Heart right ventricle (tissue), 16 donors: ENCODE measurements at regions of chr17 and their contacts with region 1.

Region 1: GRCh38 chr17:49496183-49496866 is 1.2 kb downstream of the NGFR start:
- DNase-seq: peak; percentile 73 to 85
- ATAC-seq: peak; percentile 80 to 89 (median 87)
- H3K4me3 ChIP-seq: peak overlapping the region; percentile 36 to 68 (median 62)
- H3K27ac ChIP-seq: peak overlapping the region in 4 of 10 donors; percentile 29 to 53 (median 46)
- H3K4me1 ChIP-seq: peaks cover 0 to 40% (median 29%) of the 10 kb centered on the region in 9 donors
- H3K27me3 ChIP-seq: peaks cover 0 to 95% (median 71%) of the 10 kb centered on the region in 7 donors
- CTCF ChIP-seq: peak; percentile 79 to 93 (median 87)

Region 2: DNA sequence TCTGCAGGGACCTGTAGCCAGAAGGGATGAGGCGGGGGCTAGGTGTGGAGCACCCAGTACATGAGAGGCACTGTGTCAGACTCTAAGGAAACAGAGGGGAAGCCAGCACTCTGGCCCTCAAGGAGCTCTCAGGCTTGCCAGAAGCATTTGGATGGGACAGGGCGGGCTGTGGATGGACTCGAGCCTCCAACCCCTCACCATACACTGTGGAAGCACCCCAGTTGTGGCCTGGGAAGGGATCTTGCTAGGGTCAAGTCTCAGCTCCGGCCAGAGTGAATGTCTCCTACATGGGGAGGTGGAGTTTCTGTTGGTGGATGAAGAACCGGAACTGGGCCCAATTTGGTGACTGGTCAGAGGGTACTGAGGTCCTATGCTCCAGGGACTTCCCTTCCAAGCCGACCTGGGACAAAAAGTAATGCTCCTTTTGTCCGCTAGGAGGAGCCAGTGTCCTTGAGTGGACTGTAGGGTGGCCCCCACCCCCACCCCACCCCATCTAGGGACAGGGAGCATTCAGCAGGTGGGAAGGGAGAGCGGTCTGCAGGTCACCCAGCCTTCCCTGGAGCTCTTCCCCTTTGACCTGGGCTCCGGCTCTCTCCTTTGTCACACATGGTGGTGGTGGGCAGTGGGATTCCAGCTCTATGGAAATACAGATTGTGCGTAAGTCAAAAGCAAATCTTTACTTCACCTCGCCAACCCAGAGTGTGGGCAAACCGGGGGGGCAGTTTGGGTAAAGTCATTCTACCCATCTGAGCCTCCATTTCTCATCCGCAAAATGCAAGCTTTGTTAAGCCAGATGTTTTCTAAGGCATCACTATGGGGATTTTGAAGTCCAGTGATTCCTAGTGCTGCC is 61.3 kb before region 1 on chr17:
- intact Hi-C with region 1: loop called in 1 of 10 experiments (anchors 10 kb)
- DNase-seq: peak in 1 of 2 donors; percentile 43
- ATAC-seq: peak; percentile 32 to 74 (median 64)
- H3K4me3 ChIP-seq: no peak overlapping the region
- H3K27ac ChIP-seq: no peak overlapping the region
- H3K4me1 ChIP-seq: peaks cover 0 to 8% (median 0%) of the 10 kb centered on the region in 9 donors
- H3K27me3 ChIP-seq: peaks cover 0 to 34% (median 30%) of the 10 kb centered on the region in 7 donors
- CTCF ChIP-seq: peak; percentile 70 to 83 (median 76)